H1 (cell line): ENCODE measurements at regions of chr17 and their contacts with region 1.

Region 1: GRCh38 chr17:56679115-56679766 is 85.7 kb downstream of the NOG start:
- DNase-seq: no peak
- H3K4me3 ChIP-seq: peak overlapping the region; percentile 62 to 65 (median 62)
- H3K27ac ChIP-seq: no peak overlapping the region
- H3K4me1 ChIP-seq: peaks cover 2 to 4% (median 3%) of the 10 kb centered on the region in 4 experiments; a peak in 4 of 7 replicates
- H3K27me3 ChIP-seq: peaks cover 3 to 49% (median 34%) of the 10 kb centered on the region in 4 experiments
- CTCF ChIP-seq: peak; percentile 26 to 53 (median 50)
- EP300 ChIP-seq: no peak
- POLR2A ChIP-seq: no peak
- RAD21 ChIP-seq: peak; percentile 44 to 57; a peak in 3 of 4 replicates

Region 2: DNA sequence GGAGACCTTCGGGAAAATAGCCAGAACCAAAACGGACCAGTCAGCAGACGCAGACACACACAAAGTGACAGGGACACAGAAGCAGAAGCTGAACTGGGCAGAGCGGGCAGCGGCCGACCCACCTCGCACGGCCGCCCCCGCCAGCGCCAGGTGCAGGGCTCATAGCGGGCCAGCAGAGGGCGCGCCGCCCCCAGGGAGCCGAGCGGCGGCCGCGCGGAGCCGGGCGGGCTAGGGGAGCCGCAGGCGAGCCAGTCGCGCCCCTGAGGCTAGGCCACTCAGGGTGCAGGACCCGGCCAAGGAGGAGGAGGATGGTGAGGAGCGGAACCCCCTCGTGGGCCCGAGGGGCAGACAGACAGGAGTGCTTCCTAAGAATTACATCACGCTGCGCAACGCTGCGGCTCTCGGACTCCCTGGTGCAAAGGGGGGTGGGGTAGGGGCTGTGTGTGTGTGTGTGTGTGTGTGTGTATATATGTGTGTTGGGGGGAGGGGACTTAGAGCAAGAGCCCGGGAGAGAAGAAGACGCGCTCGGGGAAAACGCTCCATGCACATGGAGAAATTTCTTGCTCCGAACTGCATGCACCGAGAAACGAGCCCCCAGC is 86.7 kb before region 1 on chr17:
- CTCF ChIA-PET with region 1: interaction called, 17 read pairs
- POLR2A ChIA-PET with region 1: interaction called, 4 read pairs
- DNase-seq: peak in 1 of 2 experiments; percentile 93
- H3K4me3 ChIP-seq: peak overlapping the region; percentile 39 to 75 (median 66)
- H3K27ac ChIP-seq: no peak overlapping the region
- H3K4me1 ChIP-seq: peaks cover 0 to 11% (median 4%) of the 10 kb centered on the region in 4 experiments; a peak in 5 of 7 replicates
- H3K27me3 ChIP-seq: peaks cover 12 to 49% (median 36%) of the 10 kb centered on the region in 4 experiments
- CTCF ChIP-seq: peak; percentile 86 to 96 (median 87)
- EP300 ChIP-seq: 0 out of 3 replicates have a peak, but pooled peaks of 1 of the 2 experiments have one; percentile 20
- POLR2A ChIP-seq: no peak
- RAD21 ChIP-seq: peak; percentile 74 to 93

Region 3: GRCh38 chr17:56690486-56691291 is 11.4 kb after region 1 on chr17:
- CTCF ChIA-PET with region 1: interaction called, 18 read pairs
- POLR2A ChIA-PET with region 1: no interaction called
- DNase-seq: no peak
- H3K4me3 ChIP-seq: no peak overlapping the region
- H3K27ac ChIP-seq: no peak overlapping the region
- H3K4me1 ChIP-seq: no peaks in the 10 kb centered on the region
- H3K27me3 ChIP-seq: no peaks in the 10 kb centered on the region
- CTCF ChIP-seq: no peak
- EP300 ChIP-seq: no peak
- POLR2A ChIP-seq: no peak
- RAD21 ChIP-seq: no peak

Region 4: DNA sequence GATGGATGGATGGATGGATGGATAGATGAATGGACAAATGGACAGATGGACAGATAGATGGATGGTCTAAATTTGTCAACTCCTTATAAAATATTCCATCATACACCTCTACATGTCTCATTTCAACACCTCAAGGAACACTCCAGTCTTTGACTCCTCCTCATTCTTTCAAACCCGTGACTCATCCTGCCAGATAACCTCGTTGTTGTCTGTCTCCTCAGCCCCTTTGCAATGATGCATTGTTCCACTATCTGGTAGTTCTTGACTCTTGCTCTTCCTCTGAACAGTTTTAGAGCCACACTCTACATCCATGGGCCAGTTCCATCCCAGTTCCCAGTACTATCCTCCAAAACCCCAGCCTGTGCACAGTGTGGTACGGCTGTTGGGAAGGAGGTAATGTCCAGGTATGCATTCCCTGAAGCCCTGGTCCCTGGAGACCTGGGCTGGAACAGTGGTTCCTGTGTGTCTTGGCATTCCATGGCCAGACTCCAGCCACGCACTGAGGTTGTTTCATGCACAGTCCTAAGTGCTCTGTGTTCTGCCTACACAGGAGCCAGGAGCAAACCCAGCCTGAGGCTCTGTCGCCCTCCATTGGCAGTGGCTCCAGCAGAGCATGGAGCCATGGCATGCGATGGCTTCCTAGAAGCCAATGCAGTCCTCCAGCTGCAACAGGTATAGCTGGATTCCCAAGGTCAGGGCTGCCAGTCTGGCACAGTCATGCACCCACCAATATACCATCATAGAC is 48.8 kb after region 1 on chr17:
- CTCF ChIA-PET with region 1: no interaction called
- POLR2A ChIA-PET with region 1: no interaction called
- DNase-seq: no peak
- H3K4me3 ChIP-seq: no peak overlapping the region
- H3K27ac ChIP-seq: no peak overlapping the region
- H3K4me1 ChIP-seq: no peaks in the 10 kb centered on the region
- H3K27me3 ChIP-seq: no peaks in the 10 kb centered on the region
- CTCF ChIP-seq: peak; percentile 26 to 38 (median 34); a peak in 3 of 4 replicates
- EP300 ChIP-seq: no peak
- POLR2A ChIP-seq: no peak
- RAD21 ChIP-seq: peak; percentile 42 to 58